ENCODE measurements at regions of chr12 and their contacts with region 1.

Region 1: GRCh38 chr12:89225808-89226411 is 126.4 kb downstream of the DUSP6 start:
- DNase-seq: peak; percentile 99
- ATAC-seq: peak; percentile 97
- H3K4me3 ChIP-seq: peak overlapping the region; percentile 55
- H3K27ac ChIP-seq: peak overlapping the region; percentile 95
- H3K4me1 ChIP-seq: peaks cover 40% of the 10 kb centered on the region
- H3K27me3 ChIP-seq: no peaks in the 10 kb centered on the region
- CTCF ChIP-seq: no peak

Region 2: DNA sequence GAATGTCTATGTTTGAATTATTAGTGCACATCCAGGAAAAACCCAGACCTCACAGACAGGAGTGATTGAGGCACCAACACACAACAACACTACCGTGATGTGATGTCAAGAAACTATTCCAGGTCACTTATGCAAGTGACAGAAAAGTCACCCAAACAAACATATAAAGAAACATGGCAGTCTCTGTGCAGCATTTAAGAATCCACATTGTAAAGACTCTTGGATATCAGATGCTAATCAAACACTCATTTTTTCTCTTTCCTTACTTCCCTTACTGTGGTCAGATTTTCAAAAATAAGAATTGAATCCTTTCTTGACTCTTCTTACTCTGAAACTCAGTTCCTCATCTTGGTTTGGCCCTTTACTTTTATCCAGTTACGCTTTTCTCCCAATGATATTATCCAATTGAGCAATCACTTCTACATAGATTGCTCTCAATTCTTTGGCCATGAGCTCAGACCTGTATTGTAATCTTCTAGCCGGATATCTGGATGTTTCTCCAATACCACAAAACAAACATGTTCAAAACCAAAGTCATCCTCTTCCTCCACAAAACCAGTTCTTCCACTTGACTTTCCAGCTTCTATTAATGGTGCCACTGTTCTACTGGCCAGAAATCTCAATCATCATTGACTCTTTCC is 11.0 kb after region 1 on chr12:
- CTCF ChIA-PET with region 1: interaction called, 3 read pairs
- POLR2A ChIA-PET with region 1: no interaction called
- intact Hi-C with region 1: loop called (anchors 1 kb)
- DNase-seq: peak; percentile 97
- ATAC-seq: peak; percentile 84
- H3K4me3 ChIP-seq: 0 out of 2 replicates have a peak overlapping the region, but pooled peaks have one; percentile 2
- H3K27ac ChIP-seq: peak overlapping the region; percentile 96
- H3K4me1 ChIP-seq: peaks cover 32% of the 10 kb centered on the region
- H3K27me3 ChIP-seq: no peaks in the 10 kb centered on the region
- CTCF ChIP-seq: no peak